Mucosa of descending colon (tissue), 3 donors: ENCODE measurements at regions of chr1 and their contacts with region 1.

Region 1: GRCh38 chr1:220690140-220691025 is at the start of gene C1orf115:
- DNase-seq: peak; percentile 84 to 93 (median 91)
- ATAC-seq: peak; percentile 99
- H3K4me3 ChIP-seq: peak within 1 kb of the TSS; percentile 70
- H3K4me1 ChIP-seq: peaks cover 8% of the 10 kb centered on the region
- CTCF ChIP-seq: peak; percentile 98
- total RNA-seq, gene C1orf115: 53.2 to 108 (median 85.2) TPM

Region 2: DNA sequence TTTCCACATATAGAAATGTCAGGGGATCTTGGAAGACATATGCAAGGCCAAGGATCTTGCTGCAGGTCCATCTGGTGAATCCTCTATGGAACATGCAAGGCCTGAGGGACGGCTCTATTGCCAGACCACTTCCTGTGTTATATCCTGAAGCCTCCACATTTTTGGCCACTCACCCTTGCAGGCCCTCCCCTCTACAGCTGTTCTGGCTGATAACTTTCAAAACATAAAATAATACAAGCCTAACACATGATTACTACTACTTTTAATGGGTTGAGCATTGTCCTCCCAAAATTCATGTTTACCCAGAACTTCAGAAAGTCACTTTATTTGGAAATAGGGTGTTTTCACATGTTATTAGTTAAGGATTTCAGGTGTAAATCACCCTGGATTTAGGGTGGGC is 1535.2 kb before region 1 on chr1:
- intact Hi-C with region 1: no loop called
- DNase-seq: no peak
- ATAC-seq: no peak
- H3K4me3 ChIP-seq: no peak overlapping the region
- H3K4me1 ChIP-seq: no peaks in the 10 kb centered on the region
- CTCF ChIP-seq: no peak

Region 3: DNA sequence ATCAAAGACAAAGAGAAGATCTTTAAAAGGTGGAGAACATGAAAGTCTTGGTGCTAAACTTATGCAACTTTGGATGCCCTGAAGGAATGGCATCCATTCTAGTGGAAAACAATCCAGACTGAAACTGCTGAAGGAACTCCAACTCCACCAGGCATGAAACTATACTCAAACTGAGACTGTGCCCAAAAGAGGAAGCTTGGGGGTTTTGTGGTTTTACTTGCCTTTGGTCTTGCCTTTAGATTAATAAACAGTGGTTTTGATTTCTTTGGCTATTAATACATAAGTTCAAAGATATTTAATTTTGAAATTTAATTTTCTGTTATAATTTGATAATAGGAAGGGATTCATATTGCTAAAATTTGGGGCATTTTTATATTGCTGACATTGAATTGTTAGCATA is 744.6 kb before region 1 on chr1:
- intact Hi-C with region 1: no loop called
- DNase-seq: no peak
- ATAC-seq: no peak
- H3K4me3 ChIP-seq: no peak overlapping the region
- H3K4me1 ChIP-seq: no peaks in the 10 kb centered on the region
- CTCF ChIP-seq: no peak

Region 4: GRCh38 chr1:220579317-220579716 is 111.1 kb before region 1 on chr1:
- intact Hi-C with region 1: no loop called
- DNase-seq: no peak
- ATAC-seq: peak; percentile 79
- H3K4me3 ChIP-seq: no peak overlapping the region
- H3K4me1 ChIP-seq: no peaks in the 10 kb centered on the region
- CTCF ChIP-seq: no peak

Region 5: GRCh38 chr1:220776720-220777326 is 86.4 kb after region 1 on chr1:
- intact Hi-C with region 1: loop called (anchors 5 kb)
- DNase-seq: peak; percentile 82 to 93 (median 91)
- ATAC-seq: peak; percentile 100
- H3K4me3 ChIP-seq: no peak overlapping the region
- H3K4me1 ChIP-seq: no peaks in the 10 kb centered on the region
- CTCF ChIP-seq: peak; percentile 83